A549 (cell line): ENCODE measurements at regions of chr2 and their contacts with region 1.

Region 1: GRCh38 chr2:57759822-57760300 is 286.7 kb upstream of the VRK2 start:
- DNase-seq: peak; percentile 71 to 86
- ATAC-seq: peak; percentile 99 to 100
- H3K4me3 ChIP-seq: peak overlapping the region; percentile 25
- H3K27ac ChIP-seq: peak overlapping the region; percentile 67 to 86
- H3K4me1 ChIP-seq: peaks cover 12% of the 10 kb centered on the region; the same call in 2 of the 3 replicates
- CTCF ChIP-seq: peak; percentile 98
- EP300 ChIP-seq: no peak
- POLR2A ChIP-seq: no peak
- RAD21 ChIP-seq: peak; percentile 99 to 100

Region 2: GRCh38 chr2:57527685-57528084 is 232.2 kb before region 1 on chr2:
- CTCF ChIA-PET with region 1: no interaction called
- POLR2A ChIA-PET with region 1: no interaction called
- DNase-seq: no peak
- ATAC-seq: no peak
- H3K4me3 ChIP-seq: no peak overlapping the region
- H3K27ac ChIP-seq: no peak overlapping the region
- H3K4me1 ChIP-seq: no peaks in the 10 kb centered on the region
- CTCF ChIP-seq: no peak
- EP300 ChIP-seq: no peak
- POLR2A ChIP-seq: no peak
- RAD21 ChIP-seq: no peak

Region 3: DNA sequence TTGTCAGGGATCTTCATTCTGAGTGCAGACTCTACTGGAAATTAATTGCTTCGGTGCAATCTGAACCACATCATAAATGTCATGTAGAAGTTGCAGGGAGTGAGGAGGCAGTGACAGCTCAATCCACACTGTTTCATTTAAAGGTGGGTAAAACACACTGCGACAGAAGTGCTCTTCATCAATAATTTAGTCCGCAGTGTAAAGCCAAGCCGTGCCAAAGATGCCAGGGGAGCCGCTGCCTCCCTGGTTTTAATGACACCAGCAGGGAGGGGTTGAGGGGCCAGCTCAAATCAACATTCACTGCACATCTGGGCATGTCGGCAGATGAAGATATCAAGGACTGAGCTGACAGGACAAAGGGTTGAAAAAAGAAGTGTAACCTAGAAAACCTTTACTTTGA is 19.0 kb before region 1 on chr2:
- CTCF ChIA-PET with region 1: interaction called, 11 read pairs
- POLR2A ChIA-PET with region 1: no interaction called
- DNase-seq: no peak
- ATAC-seq: no peak
- H3K4me3 ChIP-seq: no peak overlapping the region
- H3K27ac ChIP-seq: no peak overlapping the region
- H3K4me1 ChIP-seq: no peaks in the 10 kb centered on the region
- CTCF ChIP-seq: no peak
- EP300 ChIP-seq: no peak
- POLR2A ChIP-seq: no peak
- RAD21 ChIP-seq: no peak

Region 4: GRCh38 chr2:57882895-57883515 is 123.1 kb after region 1 on chr2:
- CTCF ChIA-PET with region 1: interaction called, 10 read pairs
- POLR2A ChIA-PET with region 1: no interaction called
- DNase-seq: peak; percentile 33 to 72
- ATAC-seq: peak; percentile 68 to 76
- H3K4me3 ChIP-seq: peak overlapping the region; percentile 39
- H3K27ac ChIP-seq: peak overlapping the region; percentile 92 to 93
- H3K4me1 ChIP-seq: peaks cover 64% of the 10 kb centered on the region
- CTCF ChIP-seq: no peak
- EP300 ChIP-seq: no peak
- POLR2A ChIP-seq: no peak
- RAD21 ChIP-seq: peak; percentile 14 to 25; a peak in 1 of 5 replicates

Region 5: GRCh38 chr2:57906152-57906732 is 146.4 kb after region 1 on chr2:
- CTCF ChIA-PET with region 1: interaction called, 29 read pairs
- POLR2A ChIA-PET with region 1: no interaction called
- DNase-seq: peak; percentile 77 to 81
- ATAC-seq: peak; percentile 99 to 100
- H3K4me3 ChIP-seq: no peak overlapping the region
- H3K27ac ChIP-seq: peak overlapping the region; percentile 20 to 22; a peak in 3 of 6 replicates
- H3K4me1 ChIP-seq: peaks cover 4% of the 10 kb centered on the region
- CTCF ChIP-seq: peak; percentile 97
- EP300 ChIP-seq: no peak
- POLR2A ChIP-seq: no peak
- RAD21 ChIP-seq: peak; percentile 99

Region 6: DNA sequence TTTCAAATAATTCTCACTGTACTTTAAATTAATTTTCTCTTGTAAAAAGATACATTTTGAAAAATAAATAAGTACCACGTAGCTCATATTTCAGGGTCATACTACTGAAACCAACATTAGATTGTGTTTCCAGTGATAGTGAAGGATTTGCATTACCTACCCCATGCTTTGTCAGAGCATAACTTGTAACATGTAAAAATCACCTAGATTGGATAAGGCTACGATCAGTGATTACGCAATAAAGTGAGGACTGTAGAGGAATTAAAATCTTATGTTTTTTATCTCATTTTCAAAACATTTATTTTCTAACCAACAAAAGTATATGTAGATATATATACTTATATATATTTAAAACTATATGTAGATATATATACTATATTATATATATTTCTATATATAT is 197.4 kb after region 1 on chr2:
- CTCF ChIA-PET with region 1: no interaction called
- POLR2A ChIA-PET with region 1: no interaction called
- DNase-seq: no peak
- ATAC-seq: no peak
- H3K4me3 ChIP-seq: no peak overlapping the region
- H3K27ac ChIP-seq: no peak overlapping the region
- H3K4me1 ChIP-seq: no peaks in the 10 kb centered on the region
- CTCF ChIP-seq: no peak
- EP300 ChIP-seq: no peak
- POLR2A ChIP-seq: no peak
- RAD21 ChIP-seq: no peak